Colonic mucosa (tissue), 4 donors: ENCODE measurements at regions of chrX and their contacts with region 1.

Region 1: DNA sequence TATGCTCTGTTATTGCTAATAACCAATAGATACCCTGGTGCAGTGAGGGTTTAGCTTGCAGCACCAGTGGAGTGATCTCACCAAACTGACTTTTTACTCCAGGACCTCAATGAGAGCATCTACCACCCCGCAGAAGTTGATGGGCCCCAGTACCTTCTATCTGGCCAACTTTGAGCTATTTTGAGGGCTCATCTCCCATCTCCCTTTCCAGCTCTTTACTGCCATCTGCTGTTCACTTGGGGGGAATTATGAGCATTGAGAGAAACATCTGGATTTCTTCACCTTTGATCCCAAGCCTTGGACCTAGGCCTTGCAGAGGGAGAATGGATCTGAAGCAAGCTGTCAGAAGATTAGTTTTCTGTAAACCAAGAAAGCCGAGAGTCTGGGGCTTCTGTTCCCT is 143.6 kb downstream of the TMEM164 start:
- DNase-seq: peak; percentile 62
- H3K4me3 ChIP-seq: no peak overlapping the region
- H3K27ac ChIP-seq: no peak overlapping the region
- H3K4me1 ChIP-seq: no peaks in the 10 kb centered on the region
- H3K27me3 ChIP-seq: no peaks in the 10 kb centered on the region
- CTCF ChIP-seq: peak; percentile 52

Region 2: GRCh38 chrX:109911046-109911445 is 235.5 kb before region 1 on chrX:
- intact Hi-C with region 1: loop called (anchors 5 kb)
- DNase-seq: no peak
- H3K4me3 ChIP-seq: no peak overlapping the region
- H3K27ac ChIP-seq: no peak overlapping the region
- H3K4me1 ChIP-seq: no peaks in the 10 kb centered on the region
- H3K27me3 ChIP-seq: no peaks in the 10 kb centered on the region
- CTCF ChIP-seq: peak; percentile 40